Natural killer cell (primary cell): ENCODE measurements at regions of chr6 and their contacts with region 1.

Region 1: GRCh38 chr6:103273048-103273447 is 1586.7 kb downstream of the HACE1 start:
- DNase-seq: no peak
- ATAC-seq: no peak
- H3K4me3 ChIP-seq: no peak overlapping the region
- H3K4me3 Mint-ChIP-seq: no peak overlapping the region
- H3K27ac ChIP-seq: no peak overlapping the region
- H3K27ac Mint-ChIP-seq: no peak overlapping the region
- H3K4me1 ChIP-seq: no peaks in the 10 kb centered on the region
- H3K4me1 Mint-ChIP-seq: no peaks in the 10 kb centered on the region
- H3K27me3 ChIP-seq: no peaks in the 10 kb centered on the region
- H3K27me3 Mint-ChIP-seq: no peaks in the 10 kb centered on the region
- CTCF ChIP-seq: no peak

Region 2: DNA sequence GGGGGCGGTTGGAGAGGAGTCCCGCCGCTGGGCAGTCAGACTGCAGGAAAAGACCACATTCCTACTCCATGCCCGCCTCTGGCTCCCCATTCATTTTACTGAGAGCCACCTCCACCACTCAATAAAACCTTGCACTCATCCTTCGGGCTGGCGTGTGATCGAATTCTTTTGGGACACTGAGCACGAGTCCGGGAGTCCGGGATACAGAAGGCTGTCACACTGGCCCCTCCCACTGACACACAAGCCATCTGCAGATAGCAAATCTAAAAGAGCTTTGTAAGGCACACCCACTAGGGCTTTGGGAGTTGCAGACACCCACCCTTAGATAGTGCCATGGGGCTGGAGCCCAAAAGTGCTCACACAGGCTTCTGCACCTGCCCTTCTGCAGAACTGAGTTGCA is 59.5 kb after region 1 on chr6:
- intact Hi-C with region 1: loop called (anchors 5 kb)
- DNase-seq: no peak
- ATAC-seq: no peak
- H3K4me3 ChIP-seq: no peak overlapping the region
- H3K4me3 Mint-ChIP-seq: no peak overlapping the region
- H3K27ac ChIP-seq: no peak overlapping the region
- H3K27ac Mint-ChIP-seq: no peak overlapping the region
- H3K4me1 ChIP-seq: no peaks in the 10 kb centered on the region
- H3K4me1 Mint-ChIP-seq: no peaks in the 10 kb centered on the region
- H3K27me3 ChIP-seq: no peaks in the 10 kb centered on the region
- H3K27me3 Mint-ChIP-seq: no peaks in the 10 kb centered on the region
- CTCF ChIP-seq: no peak

Region 3: DNA sequence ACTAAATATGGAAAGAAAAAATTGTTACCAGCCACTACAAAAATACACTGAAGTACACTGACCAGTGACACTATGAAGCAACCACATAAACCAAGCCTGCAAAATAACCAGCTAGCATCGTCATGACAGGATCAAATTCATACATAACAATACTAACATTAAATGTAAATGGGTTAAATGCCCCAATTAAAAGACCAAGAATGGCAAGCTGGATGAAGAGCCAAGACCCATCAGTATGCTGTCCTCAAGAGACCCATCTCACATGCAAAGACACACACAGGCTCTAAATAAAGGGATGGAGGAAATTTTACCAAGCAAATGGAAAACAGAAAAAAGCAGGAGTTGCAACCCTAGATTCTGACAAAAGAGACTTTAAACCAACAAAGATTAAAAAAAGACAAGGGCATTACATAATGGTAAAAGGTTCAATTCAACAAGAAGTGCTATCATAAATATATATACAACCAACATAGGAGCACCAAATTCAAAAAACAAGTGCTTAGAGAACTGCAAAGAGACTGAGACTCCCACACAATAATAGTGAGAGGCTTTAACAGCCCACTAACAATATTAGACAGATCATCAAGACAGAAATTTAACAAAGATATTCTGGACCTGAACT is 1481.9 kb after region 1 on chr6:
- intact Hi-C with region 1: no loop called
- DNase-seq: peak in 1 of 2 donors; percentile 4
- ATAC-seq: no peak
- H3K4me3 ChIP-seq: no peak overlapping the region
- H3K4me3 Mint-ChIP-seq: no peak overlapping the region
- H3K27ac ChIP-seq: no peak overlapping the region
- H3K27ac Mint-ChIP-seq: no peak overlapping the region
- H3K4me1 ChIP-seq: no peaks in the 10 kb centered on the region
- H3K4me1 Mint-ChIP-seq: no peaks in the 10 kb centered on the region
- H3K27me3 ChIP-seq: no peaks in the 10 kb centered on the region
- H3K27me3 Mint-ChIP-seq: no peaks in the 10 kb centered on the region
- CTCF ChIP-seq: no peak